ENCODE measurements at regions of chr1 and their contacts with region 1.

Region 1: DNA sequence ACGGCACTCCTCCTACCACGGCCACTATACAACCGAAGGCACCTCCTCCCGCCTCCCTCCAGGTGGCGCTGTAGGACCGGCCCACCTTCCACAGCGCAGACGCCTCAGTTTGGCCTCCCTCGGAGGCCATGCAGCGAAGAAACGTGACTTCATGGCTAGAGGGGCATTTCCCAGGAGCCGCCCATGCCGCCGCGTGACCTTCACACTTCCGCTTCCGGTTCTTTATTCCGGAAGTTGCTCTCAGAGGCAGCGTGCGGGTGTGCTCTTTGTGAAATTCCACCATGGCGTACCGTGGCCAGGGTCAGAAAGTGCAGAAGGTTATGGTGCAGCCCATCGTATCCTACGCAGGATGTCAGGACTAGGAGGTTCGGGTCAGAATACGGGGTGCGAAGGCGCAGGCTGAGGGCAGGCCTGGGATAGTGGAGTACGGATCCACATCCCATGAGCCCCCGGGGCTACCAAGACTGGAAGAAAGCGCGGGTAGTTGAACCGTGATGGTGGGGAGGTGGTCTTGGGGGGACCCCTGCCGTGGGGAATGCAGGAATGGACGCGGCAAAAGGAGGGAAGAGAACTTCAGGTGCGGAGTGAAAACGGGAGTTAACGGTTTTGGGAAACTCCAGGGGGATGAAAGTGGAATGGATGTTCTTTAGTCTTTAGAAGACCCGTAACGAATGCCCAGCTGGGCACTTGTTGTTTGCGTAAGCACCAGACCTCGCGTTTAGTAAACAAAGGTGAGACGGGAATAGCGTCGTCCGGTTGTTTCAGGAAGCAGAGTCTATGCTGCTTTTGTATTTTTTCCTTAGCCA is at the start of gene SNRPE:
- DNase-seq: peak; percentile 90 to 99 (median 95)
- ATAC-seq: peak; percentile 98
- H3K4me3 ChIP-seq: peak within 1 kb of the TSS; percentile 95
- H3K4me3 Mint-ChIP-seq: peak within 1 kb of the TSS; percentile 98
- H3K27ac ChIP-seq: peak within 1 kb of the TSS; percentile 64 to 69
- H3K27ac Mint-ChIP-seq: peak within 1 kb of the TSS; percentile 95
- H3K4me1 ChIP-seq: peaks cover 15% of the 10 kb centered on the region
- H3K4me1 Mint-ChIP-seq: peaks cover 30% of the 10 kb centered on the region
- H3K27me3 ChIP-seq: no peaks in the 10 kb centered on the region
- H3K27me3 Mint-ChIP-seq: no peaks in the 10 kb centered on the region
- CTCF ChIP-seq: peak; percentile 87
- total RNA-seq, gene SNRPE: 63.0 to 65.9 TPM

Region 2: GRCh38 chr1:202810615-202811295 is 1050.8 kb before region 1 on chr1 and contains the start of gene PCAT6:
- CTCF ChIA-PET with region 1: no interaction called
- POLR2A ChIA-PET with region 1: no interaction called
- intact Hi-C with region 1: loop called in 1 of 2 experiments (anchors 10 kb)
- DNase-seq: peak; percentile 67 to 93 (median 81)
- ATAC-seq: peak; percentile 67
- H3K4me3 ChIP-seq: peak within 1 kb of the TSS; percentile 96
- H3K4me3 Mint-ChIP-seq: peak within 1 kb of the TSS; percentile 90
- H3K27ac ChIP-seq: peak within 1 kb of the TSS in 1 of 2 donors; percentile 35
- H3K27ac Mint-ChIP-seq: peak within 1 kb of the TSS; percentile 80
- H3K4me1 ChIP-seq: peaks cover 33% of the 10 kb centered on the region
- H3K4me1 Mint-ChIP-seq: peaks cover 38% of the 10 kb centered on the region
- H3K27me3 ChIP-seq: no peaks in the 10 kb centered on the region
- H3K27me3 Mint-ChIP-seq: no peaks in the 10 kb centered on the region
- CTCF ChIP-seq: no peak
- total RNA-seq, gene PCAT6: 0.91 to 1.3 TPM

Region 3: DNA sequence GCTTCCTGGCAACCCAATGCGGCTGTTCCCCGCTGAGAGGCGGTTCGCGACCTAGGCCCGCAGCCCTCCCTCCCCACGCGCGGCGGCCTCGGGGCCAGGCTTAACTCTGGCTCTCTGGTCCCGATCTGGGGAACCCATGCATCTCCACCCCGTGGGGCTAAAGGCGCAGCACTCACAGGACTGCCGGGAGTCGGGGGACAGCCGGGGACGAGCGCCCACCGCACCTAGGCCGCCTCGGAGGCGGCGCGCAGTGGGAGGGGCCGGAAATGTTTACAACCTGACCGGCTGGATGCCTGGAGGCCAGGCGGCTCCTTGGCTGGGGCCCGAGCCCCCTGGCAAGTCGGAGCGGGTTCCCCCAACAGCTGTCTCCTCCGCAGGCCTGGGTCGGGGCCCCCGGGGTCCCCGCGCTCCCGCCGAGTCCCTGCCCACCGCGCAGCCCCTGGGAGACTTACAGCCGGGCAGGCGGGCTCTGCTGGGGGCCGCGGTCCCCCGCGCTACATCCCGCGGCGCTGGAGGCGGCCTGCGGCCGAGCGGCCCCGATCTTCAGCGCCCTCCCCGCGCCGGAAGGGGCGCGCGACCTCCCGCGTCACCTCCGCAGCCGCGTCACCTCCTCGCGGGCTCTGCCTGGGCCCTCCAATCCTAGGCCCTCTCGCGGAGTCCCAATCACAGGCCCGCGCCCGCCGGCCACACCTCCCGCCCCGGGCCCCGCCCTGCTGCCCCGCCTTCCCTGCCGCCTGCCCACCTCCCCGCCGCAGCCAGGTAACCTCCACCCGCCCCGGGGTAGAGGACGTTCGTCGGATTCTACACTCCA is 903.6 kb before region 1 on chr1 and contains the start of gene ADIPOR1:
- CTCF ChIA-PET with region 1: no interaction called
- POLR2A ChIA-PET with region 1: no interaction called
- intact Hi-C with region 1: loop called in 1 of 2 experiments (anchors 5 kb)
- DNase-seq: peak; percentile 88 to 97 (median 95)
- ATAC-seq: peak; percentile 96
- H3K4me3 ChIP-seq: peak within 1 kb of the TSS; percentile 98
- H3K4me3 Mint-ChIP-seq: peak within 1 kb of the TSS; percentile 98
- H3K27ac ChIP-seq: peak within 1 kb of the TSS; percentile 81
- H3K27ac Mint-ChIP-seq: peak within 1 kb of the TSS; percentile 95
- H3K4me1 ChIP-seq: peaks cover 38% of the 10 kb centered on the region
- H3K4me1 Mint-ChIP-seq: peaks cover 55% of the 10 kb centered on the region
- H3K27me3 ChIP-seq: no peaks in the 10 kb centered on the region
- H3K27me3 Mint-ChIP-seq: no peaks in the 10 kb centered on the region
- CTCF ChIP-seq: peak; percentile 22
- total RNA-seq, gene ADIPOR1: 91.5 to 95.6 TPM

Region 4: DNA sequence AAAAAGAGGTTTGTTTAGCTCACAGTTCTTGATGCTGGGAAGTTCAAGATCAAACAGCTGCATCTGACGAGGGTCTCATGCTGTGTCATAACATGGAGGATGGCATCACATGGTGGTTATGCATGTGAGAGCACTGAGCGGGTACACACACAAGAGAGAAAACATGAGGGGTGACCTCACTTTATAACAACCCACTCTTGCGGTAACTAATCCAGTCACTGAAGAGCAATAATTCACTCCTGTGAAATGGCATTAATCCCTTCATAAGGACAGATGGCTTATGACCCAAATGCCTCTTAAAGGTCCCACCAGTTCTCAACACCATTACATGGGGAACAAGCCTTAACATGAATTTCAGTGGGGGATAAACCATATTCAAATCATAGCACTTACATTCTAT is 608.9 kb before region 1 on chr1:
- CTCF ChIA-PET with region 1: no interaction called
- POLR2A ChIA-PET with region 1: no interaction called
- intact Hi-C with region 1: no loop called
- DNase-seq: no peak
- ATAC-seq: no peak
- H3K4me3 ChIP-seq: no peak overlapping the region
- H3K4me3 Mint-ChIP-seq: no peak overlapping the region
- H3K27ac ChIP-seq: no peak overlapping the region
- H3K27ac Mint-ChIP-seq: no peak overlapping the region
- H3K4me1 ChIP-seq: no peaks in the 10 kb centered on the region
- H3K4me1 Mint-ChIP-seq: no peaks in the 10 kb centered on the region
- H3K27me3 ChIP-seq: peaks cover 16 to 18% of the 10 kb centered on the region in 2 experiments
- H3K27me3 Mint-ChIP-seq: peaks cover 39% of the 10 kb centered on the region
- CTCF ChIP-seq: no peak

Region 5: DNA sequence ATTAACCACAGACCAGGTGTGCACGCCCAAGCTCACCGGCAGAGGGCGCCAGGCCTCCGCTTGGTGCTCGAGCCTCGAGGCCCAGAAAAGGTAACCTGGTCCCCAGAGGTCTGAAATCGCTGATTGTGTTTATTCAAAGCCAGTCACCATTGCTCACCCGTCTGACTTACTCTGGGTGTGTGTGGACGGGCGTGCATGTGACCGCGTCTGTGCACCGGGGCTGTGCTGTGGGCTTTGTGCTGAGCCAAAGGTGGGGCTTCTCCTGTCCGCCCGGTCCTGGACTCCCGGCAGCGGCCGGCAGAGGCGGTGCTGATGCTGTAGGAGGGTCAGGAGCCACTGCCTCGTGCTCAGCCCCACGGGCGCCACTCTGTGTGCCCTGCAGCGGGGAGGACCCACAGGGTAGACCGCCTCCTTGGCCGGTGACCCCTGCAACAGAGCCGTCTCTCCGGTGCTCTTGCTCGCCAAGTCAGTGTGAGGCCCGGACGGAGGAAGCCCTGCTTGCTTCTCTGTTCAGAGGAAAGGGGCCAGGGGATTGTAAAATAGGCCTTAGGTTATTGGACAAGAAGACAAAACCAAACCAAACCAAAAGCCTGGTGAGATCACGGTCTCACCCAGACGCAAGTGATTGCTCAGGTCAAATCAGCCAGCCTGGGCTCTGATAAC is 588.2 kb before region 1 on chr1:
- CTCF ChIA-PET with region 1: no interaction called
- POLR2A ChIA-PET with region 1: no interaction called
- intact Hi-C with region 1: loop called in 1 of 2 experiments (anchors 5 kb)
- DNase-seq: peak; percentile 86 to 97 (median 92)
- ATAC-seq: peak; percentile 53
- H3K4me3 ChIP-seq: peak overlapping the region; percentile 49
- H3K4me3 Mint-ChIP-seq: peak overlapping the region; percentile 55
- H3K27ac ChIP-seq: peak overlapping the region; percentile 33 to 73
- H3K27ac Mint-ChIP-seq: peak overlapping the region; percentile 85
- H3K4me1 ChIP-seq: peaks cover 75% of the 10 kb centered on the region
- H3K4me1 Mint-ChIP-seq: peaks cover 63% of the 10 kb centered on the region
- H3K27me3 ChIP-seq: no peaks in the 10 kb centered on the region
- H3K27me3 Mint-ChIP-seq: no peaks in the 10 kb centered on the region
- CTCF ChIP-seq: peak; percentile 97

Region 6: GRCh38 chr1:204128964-204129896 is 267.6 kb after region 1 on chr1:
- CTCF ChIA-PET with region 1: interaction called, 7 read pairs
- POLR2A ChIA-PET with region 1: no interaction called
- intact Hi-C with region 1: loop called (anchors 1 kb)
- DNase-seq: peak; percentile 27 to 85 (median 42)
- ATAC-seq: peak; percentile 87
- H3K4me3 ChIP-seq: no peak overlapping the region
- H3K4me3 Mint-ChIP-seq: no peak overlapping the region
- H3K27ac ChIP-seq: no peak overlapping the region
- H3K27ac Mint-ChIP-seq: no peak overlapping the region
- H3K4me1 ChIP-seq: peaks cover 11% of the 10 kb centered on the region
- H3K4me1 Mint-ChIP-seq: peaks cover 9% of the 10 kb centered on the region
- H3K27me3 ChIP-seq: no peaks in the 10 kb centered on the region
- H3K27me3 Mint-ChIP-seq: no peaks in the 10 kb centered on the region
- CTCF ChIP-seq: peak; percentile 87

Region 7: DNA sequence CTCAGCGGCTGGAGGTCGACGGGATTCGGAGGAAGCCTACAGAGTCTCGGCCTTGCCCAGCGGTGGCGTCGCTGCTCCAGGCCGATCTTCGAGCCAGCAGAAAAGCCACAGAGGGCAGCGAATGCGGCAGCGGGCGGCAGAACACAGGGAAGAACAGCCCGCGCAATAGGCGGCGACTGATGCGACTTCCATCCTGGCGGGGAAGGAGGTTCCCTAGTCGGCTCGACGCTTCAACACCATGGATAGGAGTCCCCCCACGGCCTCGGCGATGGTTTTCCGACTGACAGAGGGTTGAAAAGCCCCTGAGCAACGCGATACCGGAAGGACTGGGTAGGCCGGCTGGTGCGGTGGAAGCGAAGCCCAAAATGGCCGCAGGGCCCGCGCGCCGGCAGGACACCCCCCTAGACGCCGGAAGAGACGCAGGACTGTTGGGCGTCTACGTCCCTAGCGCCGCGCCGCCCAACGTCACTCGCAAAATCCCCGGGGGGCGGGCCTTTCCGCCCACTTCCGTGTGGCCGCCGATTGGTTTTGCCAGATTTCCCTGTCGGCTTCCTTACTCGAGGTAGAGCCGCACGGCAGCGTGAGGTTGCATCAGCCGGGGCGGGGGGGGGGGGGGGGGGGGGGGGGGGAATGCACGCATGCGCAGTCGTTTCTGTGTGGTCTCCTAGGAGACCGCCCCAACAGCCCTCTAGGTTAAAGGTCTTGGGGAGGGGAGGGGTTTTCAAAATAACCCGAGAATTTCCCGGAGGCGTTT is 550.0 kb after region 1 on chr1 and contains the start of gene PPP1R15B:
- CTCF ChIA-PET with region 1: no interaction called
- POLR2A ChIA-PET with region 1: no interaction called
- intact Hi-C with region 1: loop called in 1 of 2 experiments (anchors 10 kb)
- DNase-seq: peak; percentile 95 to 99 (median 97)
- ATAC-seq: peak; percentile 89
- H3K4me3 ChIP-seq: peak within 1 kb of the TSS; percentile 98
- H3K4me3 Mint-ChIP-seq: peak within 1 kb of the TSS; percentile 100
- H3K27ac ChIP-seq: peak within 1 kb of the TSS; percentile 100
- H3K27ac Mint-ChIP-seq: peak within 1 kb of the TSS; percentile 100
- H3K4me1 ChIP-seq: peaks cover 11% of the 10 kb centered on the region
- H3K4me1 Mint-ChIP-seq: peaks cover 25% of the 10 kb centered on the region
- H3K27me3 ChIP-seq: no peaks in the 10 kb centered on the region
- H3K27me3 Mint-ChIP-seq: no peaks in the 10 kb centered on the region
- CTCF ChIP-seq: no peak
- total RNA-seq, gene PPP1R15B: 171 to 179 TPM